Activated CD4-positive, alpha-beta memory T cell treated with anti-CD3 and anti-CD28 coated beads for 36 hours (primary cell): ENCODE measurements at regions of chr1 and their contacts with region 1.

Region 1: DNA sequence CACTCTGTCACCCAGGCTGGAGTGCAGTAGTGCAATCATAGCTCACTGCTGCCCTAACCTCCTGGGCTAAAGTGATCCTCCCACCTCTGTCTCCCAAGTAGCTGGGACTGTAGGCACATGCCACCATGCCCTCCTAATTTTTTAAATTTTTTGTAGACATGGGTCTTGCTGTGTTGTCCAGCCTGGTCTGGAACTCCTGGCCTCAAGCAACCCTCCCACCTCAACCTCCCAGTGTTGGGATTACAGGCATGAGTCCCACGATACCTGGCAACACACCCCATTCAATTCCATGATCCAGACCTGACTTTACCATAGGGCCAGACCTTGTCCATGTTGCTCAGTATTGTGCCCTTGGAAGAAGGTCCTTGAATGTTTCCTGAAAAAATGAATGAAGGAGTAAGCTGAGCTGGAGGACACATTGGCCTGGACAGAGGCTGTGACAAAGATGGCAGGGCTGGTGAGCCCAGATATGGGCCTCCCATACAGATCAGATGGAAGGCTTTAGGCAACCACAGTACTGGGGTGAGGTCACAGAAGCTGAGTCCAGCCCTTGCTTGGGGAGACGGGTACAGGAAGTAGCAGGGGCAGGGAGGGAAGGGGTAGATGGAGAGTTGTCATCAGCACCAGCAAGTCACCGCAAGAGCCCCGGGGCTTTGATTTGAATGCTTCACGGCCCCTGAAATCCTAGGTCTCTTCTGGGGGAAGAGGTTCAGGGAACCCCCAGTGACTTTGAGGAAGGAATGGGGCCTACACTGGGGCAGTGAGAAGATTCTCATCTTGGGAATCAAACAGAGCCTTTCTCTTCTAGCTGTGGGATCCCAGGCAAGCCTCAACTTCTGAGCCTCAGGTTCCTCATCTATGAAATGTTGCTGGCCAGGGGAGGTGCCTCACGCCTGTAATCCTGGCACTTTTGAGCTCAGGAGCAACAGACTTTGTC is 40.1 kb upstream of the DMBX1 start:
- DNase-seq: no peak
- H3K4me3 Mint-ChIP-seq: no peak overlapping the region
- H3K27ac Mint-ChIP-seq: no peak overlapping the region
- H3K4me1 Mint-ChIP-seq: peaks cover 16% of the 10 kb centered on the region
- H3K27me3 Mint-ChIP-seq: peaks cover 51% of the 10 kb centered on the region

Region 2: GRCh38 chr1:46477153-46477929 is 27.9 kb after region 1 on chr1:
- CTCF ChIA-PET with region 1: interaction called, 12 read pairs
- POLR2A ChIA-PET with region 1: no interaction called
- intact Hi-C with region 1: no loop called
- DNase-seq: peak; percentile 88
- H3K4me3 Mint-ChIP-seq: no peak overlapping the region
- H3K27ac Mint-ChIP-seq: no peak overlapping the region
- H3K4me1 Mint-ChIP-seq: no peaks in the 10 kb centered on the region
- H3K27me3 Mint-ChIP-seq: peaks cover 24% of the 10 kb centered on the region